ENCODE measurements at regions of chr2 and their contacts with region 1.

Region 1: DNA sequence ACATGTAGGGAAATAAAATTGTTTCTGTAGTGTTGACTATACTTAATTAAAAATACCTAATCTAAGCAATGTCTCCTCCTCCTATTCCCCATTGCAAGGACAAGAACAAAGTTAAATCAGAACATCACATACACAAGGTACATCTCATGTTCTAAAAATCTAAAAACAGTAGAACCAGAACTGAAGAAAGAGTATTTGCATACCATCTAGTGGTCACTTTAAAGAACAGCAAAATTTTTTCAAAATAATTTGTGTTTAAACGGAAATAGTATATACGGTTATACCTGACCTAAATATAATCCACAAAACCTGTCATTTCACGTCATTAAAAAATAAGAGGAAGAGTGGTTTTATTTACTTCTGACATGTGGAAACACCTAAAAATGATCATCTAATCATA is 294.3 kb upstream of the KCNH7 start:
- DNase-seq: peak; percentile 1 to 6
- ATAC-seq: peak in 1 of 2 experiments; percentile 42; a peak in 2 of 6 replicates
- H3K4me3 ChIP-seq: no peak overlapping the region
- H3K27ac ChIP-seq: no peak overlapping the region
- H3K4me1 ChIP-seq: no peaks in the 10 kb centered on the region
- CTCF ChIP-seq: peak; percentile 58
- EP300 ChIP-seq: no peak
- POLR2A ChIP-seq: no peak
- RAD21 ChIP-seq: peak; percentile 73 to 75

Region 2: DNA sequence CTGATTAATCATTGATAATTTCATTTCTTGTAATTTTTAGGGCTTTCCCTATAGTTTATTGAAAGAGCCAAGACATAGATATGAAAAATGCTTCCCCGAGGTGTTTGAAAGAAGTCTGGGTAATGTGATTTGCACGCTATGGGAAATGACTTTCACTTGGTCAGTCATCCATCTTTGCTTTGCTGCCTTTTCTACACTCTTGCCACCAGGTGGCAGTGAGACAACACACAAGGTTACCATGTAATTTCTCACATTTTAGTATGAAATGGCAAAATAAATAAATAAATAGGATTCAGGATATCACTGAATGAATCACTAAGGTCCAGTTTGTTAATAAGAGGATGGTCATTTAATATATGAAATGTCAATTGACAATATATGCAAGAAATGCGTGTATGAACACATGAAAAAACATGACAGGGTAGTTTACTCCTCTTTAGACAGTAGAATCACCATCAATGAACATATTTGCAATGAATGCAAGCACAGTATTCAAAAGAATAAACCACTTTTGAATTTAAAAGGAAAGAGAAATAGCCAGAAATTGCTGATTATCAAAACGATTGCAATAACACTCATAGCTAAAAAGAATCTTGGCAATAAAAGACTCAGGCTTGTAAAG is 242.0 kb before region 1 on chr2:
- CTCF ChIA-PET with region 1: interaction called, 10 read pairs
- POLR2A ChIA-PET with region 1: no interaction called
- DNase-seq: peak; percentile 7 to 75
- ATAC-seq: peak; percentile 84 to 90
- H3K4me3 ChIP-seq: peak overlapping the region; percentile 19; the same call in 2 of the 3 replicates
- H3K27ac ChIP-seq: no peak overlapping the region
- H3K4me1 ChIP-seq: no peaks in the 10 kb centered on the region
- CTCF ChIP-seq: peak; percentile 92
- EP300 ChIP-seq: no peak
- POLR2A ChIP-seq: no peak
- RAD21 ChIP-seq: peak; percentile 86 to 89

Region 3: GRCh38 chr2:163171786-163172531 is 39.1 kb after region 1 on chr2:
- CTCF ChIA-PET with region 1: no interaction called
- POLR2A ChIA-PET with region 1: no interaction called
- DNase-seq: peak in 1 of 2 experiments; percentile 51
- ATAC-seq: peak; percentile 78 to 92
- H3K4me3 ChIP-seq: no peak overlapping the region
- H3K27ac ChIP-seq: peak overlapping the region; percentile 34 to 54; a peak in 4 of 6 replicates
- H3K4me1 ChIP-seq: peaks cover 32% of the 10 kb centered on the region
- CTCF ChIP-seq: no peak
- EP300 ChIP-seq: no peak
- POLR2A ChIP-seq: no peak
- RAD21 ChIP-seq: no peak

Measured in A549 (cell line).